A673 (cell line): ENCODE measurements at regions of chr3 and their contacts with region 1.

Region 1: GRCh38 chr3:178182337-178182779 is 353.9 kb upstream of the KCNMB2 start:
- DNase-seq: no peak
- H3K4me3 ChIP-seq: no peak overlapping the region
- H3K27ac ChIP-seq: no peak overlapping the region
- H3K4me1 ChIP-seq: no peaks in the 10 kb centered on the region
- H3K27me3 ChIP-seq: no peaks in the 10 kb centered on the region
- CTCF ChIP-seq: no peak

Region 2: DNA sequence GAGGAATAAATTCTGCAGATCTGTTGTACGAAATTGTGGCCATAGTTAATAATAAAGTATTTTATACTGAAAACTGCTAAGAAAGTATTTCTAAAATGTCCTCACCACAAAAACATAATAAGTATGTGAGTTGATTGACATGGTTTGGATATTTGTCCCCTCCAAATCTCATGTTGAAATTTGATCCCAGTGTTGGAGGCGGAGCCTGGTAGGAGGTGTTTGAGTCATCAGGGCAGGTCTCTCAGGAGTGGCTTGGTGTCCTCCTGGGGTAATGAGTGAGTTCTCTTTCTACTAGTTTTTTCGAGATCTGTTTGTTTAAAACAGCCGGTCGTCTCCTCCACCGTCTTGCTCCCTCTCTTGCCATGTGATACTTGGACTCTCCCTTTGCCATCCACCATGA is 70.2 kb before region 1 on chr3:
- CTCF ChIA-PET with region 1: no interaction called
- POLR2A ChIA-PET with region 1: no interaction called
- intact Hi-C with region 1: no loop called
- DNase-seq: peak; percentile 42
- H3K4me3 ChIP-seq: no peak overlapping the region
- H3K27ac ChIP-seq: no peak overlapping the region
- H3K4me1 ChIP-seq: no peaks in the 10 kb centered on the region
- H3K27me3 ChIP-seq: no peaks in the 10 kb centered on the region
- CTCF ChIP-seq: no peak

Region 3: DNA sequence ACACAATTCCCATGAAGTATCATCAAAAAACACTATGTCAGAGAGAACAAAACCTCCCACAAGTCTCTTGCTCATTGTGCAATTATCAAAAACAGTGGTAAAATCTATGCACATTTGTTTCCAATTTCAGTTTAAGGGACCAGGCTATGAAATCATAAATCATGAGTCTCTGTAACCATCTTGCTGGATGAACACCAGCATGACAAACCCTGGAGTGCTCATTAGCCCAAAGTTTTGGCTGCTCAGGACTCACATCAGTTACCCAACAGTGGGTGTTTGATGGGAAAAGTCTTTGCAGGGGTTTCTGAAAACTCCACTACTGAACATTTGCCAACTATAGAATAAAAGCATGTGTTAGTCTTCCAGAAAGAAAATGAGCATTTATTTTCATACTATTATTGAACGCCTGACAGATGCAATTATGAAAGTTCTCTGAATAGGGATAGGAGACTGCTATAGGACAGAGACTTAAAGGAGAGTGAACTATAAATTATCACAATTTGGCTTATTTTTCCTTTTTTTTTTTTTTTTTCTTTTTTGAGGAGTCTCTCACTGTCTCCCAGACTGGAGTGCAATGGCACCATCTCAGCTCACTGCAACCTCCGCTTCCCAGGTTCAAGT is 113.0 kb after region 1 on chr3:
- CTCF ChIA-PET with region 1: no interaction called
- POLR2A ChIA-PET with region 1: no interaction called
- intact Hi-C with region 1: no loop called
- DNase-seq: peak; percentile 67
- H3K4me3 ChIP-seq: no peak overlapping the region
- H3K27ac ChIP-seq: no peak overlapping the region
- H3K4me1 ChIP-seq: peaks cover 13% of the 10 kb centered on the region
- H3K27me3 ChIP-seq: no peaks in the 10 kb centered on the region
- CTCF ChIP-seq: no peak

Region 4: DNA sequence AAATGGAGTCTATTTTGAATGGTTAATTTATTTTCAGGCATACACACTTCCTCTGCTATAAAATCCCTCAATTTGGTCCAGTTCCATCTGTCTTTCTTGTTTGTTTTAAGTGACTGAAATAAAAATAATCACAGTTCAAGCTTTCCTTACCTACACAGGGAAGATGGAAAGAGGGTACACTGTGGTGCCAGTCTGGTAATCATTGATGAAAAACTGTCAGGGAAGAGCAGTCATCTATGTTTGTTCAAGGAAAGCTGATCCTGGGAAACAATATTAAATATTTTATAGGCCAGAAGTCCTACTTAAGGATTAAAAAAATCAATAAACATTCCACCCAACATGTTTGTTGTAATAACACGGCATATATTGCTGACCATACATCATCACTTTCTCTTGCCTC is 238.7 kb after region 1 on chr3:
- CTCF ChIA-PET with region 1: no interaction called
- POLR2A ChIA-PET with region 1: interaction called, 10 read pairs
- intact Hi-C with region 1: no loop called
- DNase-seq: no peak
- H3K4me3 ChIP-seq: no peak overlapping the region
- H3K27ac ChIP-seq: no peak overlapping the region
- H3K4me1 ChIP-seq: no peaks in the 10 kb centered on the region
- H3K27me3 ChIP-seq: no peaks in the 10 kb centered on the region
- CTCF ChIP-seq: no peak

Region 5: DNA sequence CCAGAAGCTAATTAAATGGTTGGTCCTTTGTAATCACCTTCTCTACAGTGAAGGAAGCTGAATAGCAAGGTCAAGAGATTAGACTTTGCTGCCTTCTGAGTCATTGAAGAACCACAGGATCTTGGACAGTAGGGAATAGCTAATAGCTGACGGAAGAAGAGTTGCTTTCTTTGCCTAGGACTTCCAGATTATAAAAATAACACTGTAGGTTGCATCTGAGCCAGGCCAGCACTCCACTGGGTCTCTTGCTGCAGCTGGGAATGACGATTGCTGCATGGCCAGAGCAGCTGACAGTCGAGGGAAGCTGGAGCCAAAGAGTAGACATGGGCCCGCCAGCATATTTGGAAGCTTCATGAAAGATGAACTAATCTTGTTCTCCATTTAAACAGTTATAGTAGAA is 272.4 kb after region 1 on chr3:
- CTCF ChIA-PET with region 1: no interaction called
- POLR2A ChIA-PET with region 1: no interaction called
- intact Hi-C with region 1: no loop called
- DNase-seq: no peak
- H3K4me3 ChIP-seq: no peak overlapping the region
- H3K27ac ChIP-seq: no peak overlapping the region
- H3K4me1 ChIP-seq: peaks cover 18% of the 10 kb centered on the region
- H3K27me3 ChIP-seq: no peaks in the 10 kb centered on the region
- CTCF ChIP-seq: no peak